HEK293 (cell line): ENCODE measurements at regions of chr1 and their contacts with region 1.

Region 1: DNA sequence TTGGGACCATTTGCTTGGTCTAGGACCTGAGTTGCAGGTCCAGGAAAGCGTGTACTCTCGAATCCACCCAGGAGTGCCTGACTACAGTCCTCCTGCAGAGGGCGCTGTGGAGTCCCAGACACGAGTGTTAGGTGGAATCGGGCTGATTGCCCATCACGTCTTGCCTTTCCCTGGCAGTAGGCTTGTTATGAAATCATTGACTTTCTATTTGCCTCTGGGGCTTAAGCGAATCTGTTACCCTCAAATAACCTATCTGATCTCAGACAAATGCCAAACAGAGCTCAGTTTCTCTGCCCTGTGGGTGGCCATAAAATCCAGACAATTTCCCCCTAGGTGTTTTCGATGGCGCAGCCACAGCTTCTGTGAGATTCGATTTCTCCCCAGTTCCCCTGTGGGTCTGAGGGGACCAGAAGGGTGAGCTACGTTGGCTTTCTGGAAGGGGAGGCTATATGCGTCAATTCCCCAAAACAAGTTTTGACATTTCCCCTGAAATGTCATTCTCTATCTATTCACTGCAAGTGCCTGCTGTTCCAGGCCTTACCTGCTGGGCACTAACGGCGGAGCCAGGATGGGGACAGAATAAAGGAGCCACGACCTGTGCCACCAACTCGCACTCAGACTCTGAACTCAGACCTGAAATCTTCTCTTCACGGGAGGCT is at the start of gene IL20:
- H3K4me3 ChIP-seq: no peak within 1 kb of the TSS
- H3K27ac ChIP-seq: no peak within 1 kb of the TSS
- H3K4me1 ChIP-seq: no peaks in the 10 kb centered on the region
- CTCF ChIP-seq: peak; percentile 68

Region 2: DNA sequence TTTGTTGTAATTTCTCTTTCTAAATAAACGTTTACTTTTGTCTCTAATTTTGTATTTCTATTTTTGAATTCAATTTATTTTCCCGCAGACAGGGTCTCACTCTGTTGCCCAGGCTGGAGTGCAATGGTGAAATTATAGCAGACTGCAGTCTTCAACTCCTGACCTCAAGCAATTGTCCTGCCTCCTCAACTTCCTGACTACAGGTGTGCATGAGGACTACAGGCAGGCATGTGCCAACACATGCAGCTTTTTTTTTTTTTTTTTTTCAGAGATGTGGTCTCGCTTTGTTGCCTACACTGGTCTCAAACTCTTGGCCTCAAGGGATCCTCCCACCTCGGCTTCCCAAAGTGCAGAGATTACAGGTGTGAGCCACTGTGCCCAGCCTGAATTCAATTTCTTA is 36.4 kb before region 1 on chr1:
- CTCF ChIA-PET with region 1: no interaction called
- POLR2A ChIA-PET with region 1: no interaction called
- H3K4me3 ChIP-seq: no peak overlapping the region
- H3K27ac ChIP-seq: no peak overlapping the region
- H3K4me1 ChIP-seq: 0 out of 2 replicates have a peak, but pooled peaks cover 3% of the 10 kb centered on the region
- CTCF ChIP-seq: no peak

Region 3: DNA sequence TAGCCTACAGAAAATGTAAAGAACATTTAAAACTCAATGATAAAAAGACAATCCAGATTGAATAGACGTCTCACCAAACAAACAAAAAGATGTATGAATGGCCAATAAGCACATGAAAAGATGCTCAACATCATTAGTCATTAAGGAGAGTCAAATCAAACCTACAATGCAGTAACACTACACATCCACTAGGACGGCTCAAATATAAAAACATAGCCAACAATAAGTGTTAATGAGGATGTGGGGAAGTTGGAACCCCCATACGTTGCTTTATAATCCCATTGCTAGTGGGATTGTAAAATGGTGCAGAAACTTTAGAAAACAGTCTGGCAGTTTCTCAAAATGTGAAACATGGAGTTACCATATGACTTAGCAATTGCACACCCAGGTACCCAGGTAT is 17.4 kb after region 1 on chr1:
- CTCF ChIA-PET with region 1: interaction called, 15 read pairs
- POLR2A ChIA-PET with region 1: no interaction called
- H3K4me3 ChIP-seq: no peak overlapping the region
- H3K27ac ChIP-seq: no peak overlapping the region
- H3K4me1 ChIP-seq: no peaks in the 10 kb centered on the region
- CTCF ChIP-seq: no peak

Region 4: DNA sequence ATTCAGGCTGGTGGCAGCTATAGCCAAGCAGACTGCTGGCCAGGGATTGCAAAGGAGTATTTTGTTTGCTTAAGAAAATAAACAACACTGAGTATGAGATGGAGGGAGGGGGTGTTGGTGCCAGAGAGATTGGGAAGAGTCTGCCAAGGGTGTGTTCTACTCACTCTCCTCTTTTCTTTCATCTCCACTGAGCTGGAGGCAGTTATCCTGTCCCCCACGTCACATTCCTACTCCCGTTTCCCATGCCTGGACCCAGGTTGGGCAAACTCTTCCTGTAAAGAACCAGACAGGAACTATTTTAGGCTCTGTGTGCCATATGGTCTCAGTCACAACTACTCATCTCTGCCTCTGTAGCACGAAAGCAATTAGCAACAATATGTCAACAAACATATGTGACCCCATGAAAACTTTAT is 30.7 kb after region 1 on chr1:
- CTCF ChIA-PET with region 1: interaction called, 11 read pairs
- POLR2A ChIA-PET with region 1: no interaction called
- H3K4me3 ChIP-seq: no peak overlapping the region
- H3K27ac ChIP-seq: no peak overlapping the region
- H3K4me1 ChIP-seq: no peaks in the 10 kb centered on the region; the same call in 1 of the 2 replicates
- CTCF ChIP-seq: no peak

Region 5: GRCh38 chr1:206905280-206906164 is 40.4 kb after region 1 on chr1:
- CTCF ChIA-PET with region 1: interaction called, 22 read pairs
- POLR2A ChIA-PET with region 1: no interaction called
- H3K4me3 ChIP-seq: no peak overlapping the region
- H3K27ac ChIP-seq: no peak overlapping the region
- H3K4me1 ChIP-seq: no peaks in the 10 kb centered on the region
- CTCF ChIP-seq: no peak